Endothelial cell of umbilical vein (primary cell): ENCODE measurements at regions of chr3 and their contacts with region 1.

Region 1: DNA sequence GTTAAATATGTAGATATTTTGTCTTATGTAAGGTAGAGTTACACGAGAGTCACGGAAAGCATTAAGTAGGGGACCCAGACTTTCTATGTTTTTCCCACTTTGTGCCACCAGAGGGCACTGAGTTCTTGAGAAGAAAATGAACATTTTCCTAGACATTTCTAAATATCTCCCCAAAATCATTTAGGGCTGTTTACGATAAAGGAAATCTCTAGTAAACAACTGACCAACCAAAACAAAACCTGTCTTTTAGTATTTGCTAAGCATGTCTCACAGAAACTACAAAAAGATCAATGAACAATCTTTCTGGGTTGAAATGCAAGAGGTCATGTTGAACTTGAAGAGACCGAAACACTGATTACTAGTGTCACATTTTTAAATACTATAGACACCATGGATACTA is 16.1 kb downstream of the POU1F1 start:
- DNase-seq: peak; percentile 66
- H3K4me3 ChIP-seq: no peak overlapping the region
- H3K27ac ChIP-seq: no peak overlapping the region
- H3K4me1 ChIP-seq: no peaks in the 10 kb centered on the region
- H3K27me3 ChIP-seq: no peaks in the 10 kb centered on the region
- CTCF ChIP-seq: peak; percentile 53 to 59
- POLR2A ChIP-seq: no peak

Region 2: GRCh38 chr3:87236093-87236492 is 24.2 kb before region 1 on chr3:
- CTCF ChIA-PET with region 1: interaction called, 15 read pairs
- POLR2A ChIA-PET with region 1: no interaction called
- dilution Hi-C with region 1: no loop called
- intact Hi-C with region 1: no loop called
- DNase-seq: no peak
- H3K4me3 ChIP-seq: no peak overlapping the region
- H3K27ac ChIP-seq: no peak overlapping the region
- H3K4me1 ChIP-seq: no peaks in the 10 kb centered on the region
- H3K27me3 ChIP-seq: no peaks in the 10 kb centered on the region
- CTCF ChIP-seq: no peak
- POLR2A ChIP-seq: no peak

Region 3: DNA sequence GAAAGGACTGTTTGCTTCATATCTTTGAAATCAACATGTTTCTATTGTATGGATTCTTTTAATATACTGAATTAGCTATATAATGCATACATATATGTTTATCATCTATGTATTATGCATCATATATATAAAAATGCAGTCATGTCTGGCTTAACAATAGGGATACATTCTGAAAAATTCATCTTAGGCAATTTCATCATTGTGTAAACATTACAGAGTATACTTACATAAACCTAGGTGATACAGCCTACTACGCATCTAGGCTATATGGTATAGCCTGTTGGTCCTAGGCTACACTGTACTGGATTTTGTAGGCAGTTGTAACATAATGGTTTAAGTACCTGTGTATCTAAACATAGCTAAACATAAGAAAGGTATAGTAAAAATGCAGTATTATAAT is 11.4 kb before region 1 on chr3:
- CTCF ChIA-PET with region 1: interaction called, 11 read pairs
- POLR2A ChIA-PET with region 1: no interaction called
- dilution Hi-C with region 1: no loop called
- intact Hi-C with region 1: no loop called
- DNase-seq: no peak
- H3K4me3 ChIP-seq: no peak overlapping the region
- H3K27ac ChIP-seq: no peak overlapping the region
- H3K4me1 ChIP-seq: peaks cover 2% of the 10 kb centered on the region
- H3K27me3 ChIP-seq: no peaks in the 10 kb centered on the region
- CTCF ChIP-seq: no peak
- POLR2A ChIP-seq: no peak

Region 4: DNA sequence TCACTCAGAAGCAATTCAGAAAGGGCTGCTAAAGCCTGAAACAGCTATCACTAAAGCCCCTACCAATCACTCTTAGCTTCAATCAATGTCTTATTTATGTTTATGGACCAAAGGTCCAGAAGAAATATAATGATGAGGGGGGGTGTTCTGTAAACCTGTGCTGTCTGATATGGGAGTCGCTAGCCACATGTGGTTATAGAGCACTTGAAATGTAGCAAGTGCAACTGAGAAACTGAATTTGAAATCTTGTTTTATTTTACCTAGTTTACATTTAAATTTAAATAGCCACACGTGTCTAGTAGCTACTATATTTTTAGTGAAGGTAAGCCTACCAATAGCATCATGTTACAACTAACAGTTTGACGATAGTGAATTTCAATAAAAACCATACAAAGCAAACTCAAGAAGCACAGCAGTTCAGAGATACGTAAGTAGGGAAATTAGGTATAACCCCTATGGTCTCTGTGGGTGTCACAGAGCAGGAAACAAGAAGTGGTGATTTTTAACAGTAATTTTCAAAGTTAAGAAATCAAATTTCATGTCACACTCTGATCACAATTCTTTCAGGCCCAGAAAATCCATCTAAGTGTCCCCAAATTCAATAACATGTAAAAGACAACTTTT is 12.6 kb after region 1 on chr3:
- CTCF ChIA-PET with region 1: interaction called, 67 read pairs
- POLR2A ChIA-PET with region 1: no interaction called
- dilution Hi-C with region 1: no loop called
- intact Hi-C with region 1: no loop called
- DNase-seq: no peak
- H3K4me3 ChIP-seq: no peak overlapping the region
- H3K27ac ChIP-seq: no peak overlapping the region
- H3K4me1 ChIP-seq: peaks cover 15% of the 10 kb centered on the region
- H3K27me3 ChIP-seq: no peaks in the 10 kb centered on the region
- CTCF ChIP-seq: no peak
- POLR2A ChIP-seq: no peak

Region 5: GRCh38 chr3:87298111-87298718 is 37.9 kb after region 1 on chr3:
- CTCF ChIA-PET with region 1: interaction called, 43 read pairs
- POLR2A ChIA-PET with region 1: no interaction called
- dilution Hi-C with region 1: no loop called
- intact Hi-C with region 1: loop called (anchors 2 kb)
- DNase-seq: peak; percentile 59
- H3K4me3 ChIP-seq: no peak overlapping the region
- H3K27ac ChIP-seq: no peak overlapping the region
- H3K4me1 ChIP-seq: no peaks in the 10 kb centered on the region
- H3K27me3 ChIP-seq: no peaks in the 10 kb centered on the region
- CTCF ChIP-seq: peak; percentile 25 to 35
- POLR2A ChIP-seq: no peak

Region 6: DNA sequence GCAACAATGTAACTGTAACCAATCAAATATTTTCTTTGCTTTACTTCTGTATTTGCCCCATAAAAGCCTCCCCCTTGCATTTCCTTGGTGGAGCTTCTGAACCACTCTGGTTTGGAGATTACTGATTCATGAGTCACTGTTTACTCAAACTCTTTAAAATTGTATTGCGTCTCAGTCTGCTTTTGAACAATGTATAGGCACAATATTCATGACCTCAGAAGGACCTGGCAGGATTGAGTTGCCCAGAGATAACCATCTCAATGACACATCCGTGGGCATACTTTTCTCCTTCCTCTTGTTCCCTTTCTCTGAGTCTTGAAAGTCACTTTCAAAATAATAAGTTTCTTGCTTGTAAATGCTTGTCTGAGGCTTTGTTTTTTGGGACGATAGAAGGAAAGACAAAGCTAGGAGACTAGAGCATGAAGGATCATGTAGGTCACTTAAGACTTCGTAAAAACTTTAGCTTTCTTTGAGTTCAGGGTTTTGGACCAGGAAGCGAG is 73.2 kb after region 1 on chr3:
- CTCF ChIA-PET with region 1: interaction called, 17 read pairs
- POLR2A ChIA-PET with region 1: no interaction called
- dilution Hi-C with region 1: no loop called
- intact Hi-C with region 1: no loop called
- DNase-seq: peak; percentile 91
- H3K4me3 ChIP-seq: peak overlapping the region in 1 of 3 experiments; percentile 25
- H3K27ac ChIP-seq: peak overlapping the region; percentile 97
- H3K4me1 ChIP-seq: peaks cover 40% of the 10 kb centered on the region
- H3K27me3 ChIP-seq: no peaks in the 10 kb centered on the region
- CTCF ChIP-seq: no peak
- POLR2A ChIP-seq: peak; percentile 28

Region 7: DNA sequence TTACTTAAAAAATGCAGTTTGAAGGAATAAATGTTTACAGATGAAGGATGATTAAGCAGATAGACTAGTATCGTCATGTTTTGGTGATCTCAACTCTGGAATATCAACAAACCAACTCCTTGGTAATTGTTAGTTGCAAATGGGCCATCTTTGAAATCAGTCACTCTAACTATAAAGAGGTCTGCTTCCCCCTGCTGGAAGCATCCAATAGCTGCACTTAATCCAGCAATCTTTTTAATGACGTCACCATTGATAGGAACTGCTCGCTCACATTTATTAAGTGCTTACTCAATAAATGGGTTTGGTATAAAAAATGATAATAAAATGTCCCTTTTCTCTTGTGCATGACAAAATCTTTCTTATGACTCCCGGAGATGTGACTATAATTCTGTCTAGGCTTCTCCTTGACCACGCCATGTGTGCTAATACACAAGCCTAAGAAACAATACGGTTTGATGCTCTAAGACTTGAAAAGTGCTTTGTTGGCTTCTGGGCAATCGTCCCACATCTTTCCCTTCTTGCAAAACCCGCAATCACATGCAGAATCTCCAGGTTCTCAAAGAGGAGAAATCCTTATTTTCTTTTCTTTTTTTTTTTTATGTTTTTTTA is 243.7 kb after region 1 on chr3:
- CTCF ChIA-PET with region 1: interaction called, 105 read pairs
- POLR2A ChIA-PET with region 1: no interaction called
- dilution Hi-C with region 1: no loop called
- intact Hi-C with region 1: loop called (anchors 1 kb)
- DNase-seq: peak; percentile 85
- H3K4me3 ChIP-seq: no peak overlapping the region
- H3K27ac ChIP-seq: no peak overlapping the region
- H3K4me1 ChIP-seq: no peaks in the 10 kb centered on the region
- H3K27me3 ChIP-seq: peaks cover 0 to 2% of the 10 kb centered on the region in 2 experiments
- CTCF ChIP-seq: peak; percentile 66 to 67
- POLR2A ChIP-seq: no peak